Gastrocnemius medialis (tissue), 4 donors: ENCODE measurements at regions of chr14 and their contacts with region 1.

Region 1: GRCh38 chr14:32252030-32252670 is 49.1 kb upstream of the RNU6-8 start:
- DNase-seq: peak; percentile 40 to 45
- ATAC-seq: peak; percentile 85 to 93
- H3K4me3 ChIP-seq: no peak overlapping the region
- H3K27ac ChIP-seq: peak overlapping the region in 1 of 4 donors; percentile 40
- H3K4me1 ChIP-seq: peaks cover 7 to 15% of the 10 kb centered on the region in 2 donors
- H3K27me3 ChIP-seq: no peaks in the 10 kb centered on the region
- CTCF ChIP-seq: peak; percentile 50 to 89 (median 79)
- POLR2A ChIP-seq: no peak

Region 2: DNA sequence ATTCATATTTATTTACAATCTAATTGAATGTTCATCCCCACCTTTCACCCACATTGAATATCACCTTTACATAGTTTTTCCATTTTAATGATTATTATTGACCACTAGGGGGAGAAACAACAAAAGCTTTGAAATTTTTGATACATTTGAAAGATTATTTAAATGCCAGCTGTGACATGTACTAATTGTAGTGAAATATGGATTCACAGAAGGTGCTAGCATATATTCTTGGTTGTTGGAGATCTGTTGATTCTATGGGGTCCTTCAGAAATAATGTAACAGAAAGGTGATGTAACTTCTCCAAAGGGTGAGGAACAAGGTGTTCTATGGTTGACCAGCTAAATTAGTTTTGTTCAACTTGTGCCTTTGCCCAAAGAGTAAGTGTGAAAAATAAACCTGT is 741.9 kb before region 1 on chr14:
- in situ Hi-C with region 1: loop called (anchors 5 to 25 kb)
- intact Hi-C with region 1: loop called (anchors 2 kb)
- DNase-seq: no peak
- ATAC-seq: no peak
- H3K4me3 ChIP-seq: no peak overlapping the region
- H3K27ac ChIP-seq: no peak overlapping the region
- H3K4me1 ChIP-seq: peaks cover 0 to 8% of the 10 kb centered on the region in 2 donors
- H3K27me3 ChIP-seq: no peaks in the 10 kb centered on the region
- CTCF ChIP-seq: peak; percentile 35 to 68 (median 56)
- POLR2A ChIP-seq: no peak

Region 3: DNA sequence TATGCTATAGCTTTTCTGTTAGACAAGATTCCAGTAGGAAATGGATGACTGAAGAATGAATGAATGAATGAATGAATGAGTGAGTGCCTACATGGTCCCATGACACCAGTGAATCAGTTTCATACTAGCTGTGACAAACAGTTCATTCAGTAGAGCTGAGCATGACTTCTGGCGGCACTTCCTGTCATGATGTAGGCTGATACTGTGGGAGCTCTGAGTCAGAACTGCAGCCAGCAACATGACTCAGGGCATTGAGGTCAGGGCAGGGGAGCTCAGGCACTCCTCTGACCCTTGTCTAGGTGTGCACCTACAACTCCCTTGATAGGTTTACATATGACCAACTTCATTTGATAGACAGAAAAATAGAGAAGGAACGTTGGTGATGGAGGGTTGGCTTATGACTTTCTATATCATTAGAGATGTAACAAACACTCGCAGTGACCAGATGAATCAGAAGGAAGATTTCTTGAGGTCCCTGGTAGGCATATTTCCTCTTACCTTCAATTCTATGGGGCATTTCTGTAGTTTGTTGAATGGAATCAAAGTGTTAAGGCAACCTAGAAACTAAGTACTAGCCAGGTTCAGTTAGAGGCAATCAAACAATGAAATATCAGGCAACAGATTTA is 314.3 kb before region 1 on chr14:
- in situ Hi-C with region 1: loop called (anchors 5 to 10 kb)
- intact Hi-C with region 1: no loop called
- DNase-seq: peak; percentile 41 to 51
- ATAC-seq: peak; percentile 90
- H3K4me3 ChIP-seq: no peak overlapping the region
- H3K27ac ChIP-seq: peak overlapping the region in 1 of 4 donors; percentile 3
- H3K4me1 ChIP-seq: peaks cover 0 to 8% of the 10 kb centered on the region in 2 donors
- H3K27me3 ChIP-seq: no peaks in the 10 kb centered on the region
- CTCF ChIP-seq: no peak
- POLR2A ChIP-seq: no peak

Region 4: GRCh38 chr14:32076278-32077080 is 175.7 kb before region 1 on chr14:
- in situ Hi-C with region 1: loop called in 3 of 4 experiments (anchors 5 kb)
- intact Hi-C with region 1: loop called (anchors 1 kb)
- DNase-seq: peak; percentile 93 to 96
- ATAC-seq: peak; percentile 87 to 89
- H3K4me3 ChIP-seq: peak overlapping the region; percentile 89 to 99 (median 96)
- H3K27ac ChIP-seq: peak overlapping the region; percentile 98 to 100 (median 100)
- H3K4me1 ChIP-seq: peaks cover 27 to 42% of the 10 kb centered on the region in 2 donors
- H3K27me3 ChIP-seq: no peaks in the 10 kb centered on the region
- CTCF ChIP-seq: no peak
- POLR2A ChIP-seq: peak; percentile 64 to 65

Region 5: DNA sequence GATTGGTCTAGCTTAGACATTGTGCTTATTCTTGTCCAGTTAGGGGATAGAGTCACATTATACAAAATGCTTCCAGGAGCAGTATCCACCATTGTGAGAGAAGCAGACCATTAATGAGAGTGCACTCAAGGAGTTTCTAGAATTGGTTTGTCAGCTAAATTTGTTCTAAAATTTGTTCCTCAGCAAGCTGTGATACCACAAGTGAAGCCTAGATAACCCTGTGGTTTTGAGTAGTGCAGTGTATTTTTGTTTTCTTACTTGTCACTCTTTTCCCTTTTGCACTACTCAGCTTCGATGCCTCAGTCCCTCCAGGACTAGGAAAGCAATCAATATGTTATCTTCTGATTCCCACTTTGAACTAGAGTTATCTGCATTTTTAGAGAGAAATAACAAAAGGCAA is 34.5 kb after region 1 on chr14:
- in situ Hi-C with region 1: no loop called
- intact Hi-C with region 1: no loop called
- DNase-seq: no peak
- ATAC-seq: no peak
- H3K4me3 ChIP-seq: no peak overlapping the region
- H3K27ac ChIP-seq: no peak overlapping the region
- H3K4me1 ChIP-seq: no peaks in the 10 kb centered on the region
- H3K27me3 ChIP-seq: no peaks in the 10 kb centered on the region
- CTCF ChIP-seq: no peak
- POLR2A ChIP-seq: no peak

Region 6: GRCh38 chr14:32509632-32510187 is 257.6 kb after region 1 on chr14:
- in situ Hi-C with region 1: no loop called
- intact Hi-C with region 1: loop called (anchors 5 kb)
- DNase-seq: peak; percentile 76 to 90
- ATAC-seq: peak; percentile 77 to 80
- H3K4me3 ChIP-seq: peak overlapping the region; percentile 7 to 39 (median 22)
- H3K27ac ChIP-seq: peak overlapping the region; percentile 78 to 94 (median 90)
- H3K4me1 ChIP-seq: peaks cover 72 to 78% of the 10 kb centered on the region in 2 donors
- H3K27me3 ChIP-seq: no peaks in the 10 kb centered on the region
- CTCF ChIP-seq: no peak
- POLR2A ChIP-seq: peak in 1 of 2 donors; percentile 61